ENCODE measurements at regions of chr12 and their contacts with region 1.

Region 1: GRCh38 chr12:122526683-122527477 is at the starts of genes KNTC1 and RSRC2:
- DNase-seq: peak; percentile 99
- ATAC-seq: peak; percentile 93
- H3K4me3 ChIP-seq: peak within 1 kb of the TSS; percentile 82 to 97
- H3K27ac ChIP-seq: peak within 1 kb of the TSS; percentile 83
- H3K4me1 ChIP-seq: peaks cover 8 to 24% of the 10 kb centered on the region in 2 experiments
- H3K27me3 ChIP-seq: no peaks in the 10 kb centered on the region
- CTCF ChIP-seq: no peak
- POLR2A ChIP-seq: peak; percentile 95
- RAD21 ChIP-seq: no peak; the same call in 1 of the 2 replicates
- total RNA-seq, gene KNTC1: 70.2 TPM
- total RNA-seq, gene RSRC2: 68.7 TPM

Region 2: DNA sequence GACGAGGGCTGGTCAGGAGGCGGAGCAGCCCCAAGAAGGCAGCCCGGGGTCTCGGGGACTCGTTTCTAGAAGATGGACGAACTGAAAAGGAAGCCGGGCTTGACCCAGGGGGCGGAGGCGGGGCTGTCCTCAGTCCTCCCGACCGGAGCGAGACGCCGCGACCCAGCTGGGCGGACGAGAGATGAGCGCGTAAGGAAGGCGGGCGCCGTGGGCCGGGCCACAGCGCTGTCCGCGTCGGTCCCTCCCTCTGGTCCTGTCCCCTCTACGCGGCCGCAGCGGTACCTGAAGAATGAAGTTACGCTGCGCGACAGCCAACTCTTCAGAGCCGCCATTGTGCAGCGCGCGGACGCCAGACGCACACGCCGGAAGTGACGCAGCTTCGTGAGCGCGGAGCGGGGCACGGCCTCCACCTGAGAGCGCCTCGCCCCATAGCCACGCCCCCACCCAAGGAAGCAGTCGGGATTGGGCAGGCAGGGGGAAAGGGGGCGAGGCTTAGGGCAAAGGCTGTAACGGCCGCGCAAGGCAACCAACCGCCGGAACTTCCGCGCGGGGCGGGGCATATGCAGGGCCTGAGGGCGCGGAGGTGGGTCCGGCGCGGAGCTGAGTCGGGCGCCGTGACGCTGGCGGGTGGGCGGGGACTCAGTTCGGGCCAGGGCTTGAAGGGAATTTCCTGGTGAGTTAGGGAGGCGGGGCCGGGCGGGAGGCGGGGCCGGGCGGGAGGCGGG is 301.0 kb before region 1 on chr12 and contains the start of gene DIABLO:
- CTCF ChIA-PET with region 1: no interaction called
- POLR2A ChIA-PET with region 1: no interaction called
- RAD21 ChIA-PET with region 1: no interaction called
- intact Hi-C with region 1: loop called (anchors 1 kb)
- DNase-seq: peak; percentile 97
- ATAC-seq: peak; percentile 93
- H3K4me3 ChIP-seq: peak within 1 kb of the TSS; percentile 71 to 100
- H3K27ac ChIP-seq: peak within 1 kb of the TSS; percentile 96
- H3K4me1 ChIP-seq: peaks cover 7 to 21% of the 10 kb centered on the region in 2 experiments
- H3K27me3 ChIP-seq: no peaks in the 10 kb centered on the region
- CTCF ChIP-seq: no peak
- POLR2A ChIP-seq: peak; percentile 83
- RAD21 ChIP-seq: no peak
- total RNA-seq, gene DIABLO: 60.1 TPM

Region 3: DNA sequence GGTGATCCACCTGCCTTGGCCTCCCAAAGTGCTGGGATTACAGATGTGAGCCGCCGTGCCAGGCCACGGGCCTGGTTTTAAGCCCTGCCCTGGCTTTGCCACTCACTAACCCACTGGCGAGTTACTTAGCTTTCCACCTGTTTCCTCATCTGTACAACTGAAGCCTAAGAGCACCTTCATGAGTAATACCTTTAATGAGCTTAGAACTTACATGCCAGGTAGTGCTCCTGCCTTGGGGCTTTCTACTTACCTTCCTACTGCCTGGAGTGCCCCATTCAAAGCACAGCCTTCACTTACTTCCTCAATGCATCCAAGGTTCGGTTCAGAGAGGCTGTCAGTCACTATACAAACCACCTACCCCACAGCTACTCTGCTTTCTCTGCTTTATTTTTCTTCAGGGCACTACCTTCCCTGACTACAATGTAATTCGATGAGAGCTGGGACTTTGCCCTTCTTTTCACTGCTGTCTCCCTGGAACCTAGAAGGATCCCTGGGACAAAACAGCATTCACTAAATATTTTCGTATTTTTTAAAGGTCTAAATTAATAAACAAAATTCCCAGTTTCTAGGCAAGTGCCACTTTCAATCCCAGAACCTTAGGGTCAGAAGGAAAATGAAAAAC is 40.0 kb before region 1 on chr12:
- CTCF ChIA-PET with region 1: no interaction called
- POLR2A ChIA-PET with region 1: no interaction called
- RAD21 ChIA-PET with region 1: no interaction called
- intact Hi-C with region 1: no loop called
- DNase-seq: no peak
- ATAC-seq: no peak
- H3K4me3 ChIP-seq: no peak overlapping the region
- H3K27ac ChIP-seq: no peak overlapping the region
- H3K4me1 ChIP-seq: no peaks in the 10 kb centered on the region
- H3K27me3 ChIP-seq: no peaks in the 10 kb centered on the region
- CTCF ChIP-seq: no peak
- POLR2A ChIP-seq: no peak
- RAD21 ChIP-seq: no peak

Region 4: DNA sequence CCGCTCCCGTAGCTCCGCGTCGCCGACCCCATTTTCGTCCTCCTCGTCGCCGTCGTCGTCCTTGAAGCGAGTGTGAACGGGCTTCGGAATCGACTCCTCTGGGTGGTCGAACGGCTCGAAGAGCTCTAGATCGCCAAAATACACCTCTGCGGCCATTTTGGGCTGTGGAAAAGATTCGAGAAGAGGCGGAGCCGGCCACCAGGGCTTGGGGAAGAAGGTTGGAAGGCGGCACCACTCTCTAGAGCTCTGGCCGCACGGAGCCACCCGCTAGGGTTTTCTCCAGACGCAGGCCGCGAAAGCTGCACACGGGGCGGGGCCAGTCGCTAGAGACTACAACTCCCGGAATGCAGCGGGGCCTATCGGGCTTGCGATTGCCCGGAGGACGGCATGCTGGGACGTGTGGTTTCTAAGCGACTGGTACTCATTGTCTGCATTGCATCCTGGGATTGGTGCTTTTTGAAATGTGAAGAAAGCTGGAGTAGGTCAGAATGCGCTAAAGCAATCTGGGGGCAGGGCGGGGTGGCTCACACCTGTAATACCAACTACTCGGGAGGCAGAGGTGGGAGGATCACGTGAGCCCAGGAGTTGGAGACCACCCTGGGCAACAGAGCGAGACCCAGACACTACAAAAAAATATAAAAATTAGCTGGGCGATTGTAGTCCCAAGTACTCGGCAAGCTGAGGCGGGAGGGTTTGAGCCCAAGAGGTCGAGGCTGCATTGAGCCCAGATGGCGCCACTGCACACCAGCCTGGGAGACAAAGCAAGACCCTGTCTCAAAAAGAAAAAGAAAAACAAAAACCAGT is 26.0 kb before region 1 on chr12 and contains the start of gene ZCCHC8:
- CTCF ChIA-PET with region 1: interaction called, 5 read pairs
- POLR2A ChIA-PET with region 1: interaction called, 14 read pairs
- RAD21 ChIA-PET with region 1: no interaction called
- intact Hi-C with region 1: loop called (anchors 2 kb)
- DNase-seq: peak; percentile 96
- ATAC-seq: peak; percentile 97
- H3K4me3 ChIP-seq: peak within 1 kb of the TSS; percentile 70 to 94
- H3K27ac ChIP-seq: peak within 1 kb of the TSS; percentile 86
- H3K4me1 ChIP-seq: peaks cover 10 to 19% of the 10 kb centered on the region in 2 experiments; a peak in 3 of 4 replicates
- H3K27me3 ChIP-seq: no peaks in the 10 kb centered on the region
- CTCF ChIP-seq: peak in 2 of 3 experiments; percentile 26; a peak in 3 of 6 replicates
- POLR2A ChIP-seq: peak; percentile 78
- RAD21 ChIP-seq: no peak
- total RNA-seq, gene ZCCHC8: 30.5 TPM

Region 5: GRCh38 chr12:122752464-122753318 is 225.8 kb after region 1 on chr12 and contains the start of gene DENR:
- CTCF ChIA-PET with region 1: no interaction called
- POLR2A ChIA-PET with region 1: interaction called, 3 read pairs
- RAD21 ChIA-PET with region 1: no interaction called
- intact Hi-C with region 1: loop called (anchors 1 kb)
- DNase-seq: peak; percentile 96
- ATAC-seq: peak; percentile 89
- H3K4me3 ChIP-seq: peak within 1 kb of the TSS; percentile 90 to 99
- H3K27ac ChIP-seq: peak within 1 kb of the TSS; percentile 77
- H3K4me1 ChIP-seq: peaks cover 5 to 14% of the 10 kb centered on the region in 2 experiments; a peak in 3 of 4 replicates
- H3K27me3 ChIP-seq: no peaks in the 10 kb centered on the region
- CTCF ChIP-seq: peak; percentile 48 to 91 (median 70)
- POLR2A ChIP-seq: peak; percentile 85
- RAD21 ChIP-seq: peak; percentile 99
- total RNA-seq, gene DENR: 59.1 TPM

Region 6: GRCh38 chr12:122902854-122903692 is 376.2 kb after region 1 on chr12:
- CTCF ChIA-PET with region 1: no interaction called
- POLR2A ChIA-PET with region 1: no interaction called
- RAD21 ChIA-PET with region 1: no interaction called
- intact Hi-C with region 1: no loop called
- DNase-seq: no peak
- ATAC-seq: no peak
- H3K4me3 ChIP-seq: no peak overlapping the region
- H3K27ac ChIP-seq: no peak overlapping the region
- H3K4me1 ChIP-seq: peaks cover 0 to 12% of the 10 kb centered on the region in 2 experiments; a peak in 3 of 4 replicates
- H3K27me3 ChIP-seq: no peaks in the 10 kb centered on the region
- CTCF ChIP-seq: no peak
- POLR2A ChIP-seq: no peak
- RAD21 ChIP-seq: no peak

Region 7: DNA sequence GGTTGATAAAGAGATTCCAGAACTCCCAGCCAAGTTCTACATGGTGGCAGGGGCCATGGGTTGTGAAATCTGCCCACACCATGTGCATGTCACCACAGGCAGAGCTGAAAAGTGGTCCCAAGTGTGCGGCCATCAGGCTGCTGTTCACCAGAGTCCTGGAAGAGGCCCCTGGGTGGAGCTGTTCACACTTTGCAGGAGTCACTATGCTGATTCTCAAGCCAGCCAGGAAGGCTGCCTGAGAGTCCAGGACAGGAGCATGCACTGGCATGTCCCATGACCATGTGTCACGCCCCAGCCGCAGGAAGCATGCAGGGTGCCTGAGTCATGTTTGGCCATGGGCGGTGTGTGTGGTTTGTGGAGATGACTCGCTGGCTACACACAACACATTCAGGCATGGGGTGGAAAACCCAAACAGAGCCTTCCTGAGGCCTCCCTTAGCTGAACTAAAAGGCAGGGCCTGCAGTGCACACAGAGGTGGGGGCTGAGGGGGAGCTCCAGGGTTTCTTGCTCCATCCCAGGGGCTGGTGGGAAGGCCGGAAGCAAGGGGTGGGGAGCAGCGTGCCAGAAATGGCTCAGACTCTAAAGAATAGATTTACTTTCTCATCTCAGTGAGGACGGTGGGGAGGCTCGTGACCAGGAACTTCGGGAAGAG is 419.9 kb after region 1 on chr12:
- CTCF ChIA-PET with region 1: no interaction called
- POLR2A ChIA-PET with region 1: no interaction called
- RAD21 ChIA-PET with region 1: no interaction called
- intact Hi-C with region 1: no loop called
- DNase-seq: peak; percentile 92
- ATAC-seq: peak; percentile 77
- H3K4me3 ChIP-seq: no peak overlapping the region
- H3K27ac ChIP-seq: peak overlapping the region; percentile 70
- H3K4me1 ChIP-seq: peaks cover 56 to 80% of the 10 kb centered on the region in 2 experiments
- H3K27me3 ChIP-seq: no peaks in the 10 kb centered on the region
- CTCF ChIP-seq: peak in 2 of 3 experiments; percentile 46 to 53; a peak in 4 of 6 replicates
- POLR2A ChIP-seq: no peak
- RAD21 ChIP-seq: no peak